Activated CD4-positive, alpha-beta memory T cell treated with anti-CD3 and anti-CD28 coated beads, Interleukin-2, amount 10 ng/mL, durations not matched to agents 7 days and 5 days (primary cell): ENCODE measurements at regions of chr12 and their contacts with region 1.

Region 1: DNA sequence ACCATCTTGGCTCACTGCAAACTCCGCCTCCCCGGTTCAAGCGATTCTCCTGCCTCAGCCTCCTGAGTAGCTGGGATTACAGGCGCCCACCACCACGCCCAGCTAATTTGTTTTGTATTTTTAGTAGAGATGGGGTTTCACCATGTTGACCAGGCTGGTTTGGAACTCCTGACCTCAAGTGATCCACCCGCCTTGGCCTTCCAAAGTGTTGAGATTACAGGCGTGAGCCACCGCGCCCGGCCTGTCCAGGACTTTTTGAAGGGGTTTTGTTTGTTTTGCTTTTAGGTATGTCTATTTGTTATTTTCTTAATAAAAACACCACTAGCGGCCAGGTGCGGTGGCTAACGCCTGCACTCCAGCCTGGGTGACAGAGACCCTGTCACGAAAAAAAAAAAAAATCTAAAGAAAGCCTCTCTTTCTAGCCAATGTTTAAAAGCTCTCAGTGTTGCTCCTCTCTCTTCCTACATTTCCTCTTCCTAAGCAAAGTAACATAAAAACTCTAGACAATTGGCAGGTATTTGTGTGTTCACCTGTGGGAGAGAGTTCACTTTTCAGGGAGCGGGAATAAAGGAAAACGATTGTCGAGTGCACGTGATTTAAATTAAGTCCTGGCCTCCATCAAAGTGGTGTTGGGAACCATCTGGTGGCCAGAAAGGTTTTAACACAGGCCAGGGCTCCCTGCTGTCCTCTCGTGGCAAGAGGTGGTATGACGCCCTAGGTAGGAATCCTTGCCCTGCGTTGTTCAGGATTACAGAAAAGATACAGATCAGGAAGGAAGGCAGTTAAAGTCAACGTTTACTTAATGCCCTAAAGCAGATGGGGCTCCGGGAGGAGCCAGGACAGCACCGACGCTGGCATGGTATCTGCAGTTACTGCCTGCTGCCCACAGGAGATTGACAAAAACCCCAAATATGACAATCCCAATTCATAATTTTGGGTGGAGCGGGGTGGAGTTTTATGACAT is 36.2 kb upstream of the ATP23 start:
- DNase-seq: peak; percentile 84
- H3K4me3 Mint-ChIP-seq: no peak overlapping the region
- H3K27ac Mint-ChIP-seq: no peak overlapping the region
- H3K4me1 Mint-ChIP-seq: peaks cover 7% of the 10 kb centered on the region
- H3K27me3 Mint-ChIP-seq: peaks cover 29% of the 10 kb centered on the region

Region 2: DNA sequence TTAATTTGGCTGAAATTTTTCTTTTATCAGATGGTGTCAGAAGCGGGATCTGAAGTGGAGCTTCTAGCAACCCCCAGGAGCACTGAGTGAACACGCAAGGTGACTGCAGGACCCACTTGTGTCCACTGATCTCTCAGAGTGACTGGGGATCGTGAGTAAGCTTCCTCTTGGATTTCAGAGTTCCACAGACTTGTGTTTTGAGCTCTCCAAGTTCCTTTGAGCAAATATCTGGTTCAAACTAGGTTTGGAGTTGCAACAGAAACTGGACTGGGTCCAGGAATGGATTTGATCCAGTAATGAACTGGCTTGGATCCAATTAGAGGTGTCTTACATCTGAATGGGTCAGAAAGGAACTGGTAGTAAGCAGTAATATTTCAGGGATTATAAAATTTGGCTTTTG is 247.4 kb before region 1 on chr12:
- CTCF ChIA-PET with region 1: no interaction called
- POLR2A ChIA-PET with region 1: no interaction called
- DNase-seq: no peak
- H3K4me3 Mint-ChIP-seq: no peak overlapping the region
- H3K27ac Mint-ChIP-seq: no peak overlapping the region
- H3K4me1 Mint-ChIP-seq: no peaks in the 10 kb centered on the region
- H3K27me3 Mint-ChIP-seq: peaks cover 6% of the 10 kb centered on the region

Region 3: DNA sequence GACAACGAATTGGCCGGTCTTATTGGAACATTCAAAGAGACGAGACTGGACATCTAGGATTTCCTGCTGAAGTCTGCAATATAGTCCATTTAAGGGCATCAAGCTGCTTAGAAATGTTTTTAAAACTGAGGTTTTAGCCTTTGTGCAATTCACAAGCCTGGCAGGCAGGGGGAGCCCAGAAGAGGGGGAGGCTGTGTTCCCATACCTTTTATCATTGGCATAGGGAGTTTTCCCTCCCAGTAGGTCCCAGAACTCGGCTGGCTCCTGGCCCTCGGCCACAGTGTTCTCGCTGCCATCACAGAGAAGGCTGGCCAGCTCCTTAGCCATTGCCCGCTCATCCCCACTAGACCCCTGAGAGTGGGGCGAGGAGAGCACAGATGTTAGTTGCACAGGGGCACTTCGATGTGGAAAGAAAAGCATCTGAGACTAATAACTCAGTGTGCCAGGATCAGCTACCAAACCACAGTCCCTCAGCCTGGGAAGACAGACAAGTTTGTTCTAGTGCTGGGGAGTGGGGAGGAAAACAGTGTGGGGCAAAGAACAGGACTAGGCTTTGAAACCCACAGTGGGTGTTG is 101.7 kb before region 1 on chr12:
- CTCF ChIA-PET with region 1: interaction called, 55 read pairs
- POLR2A ChIA-PET with region 1: interaction called, 3 read pairs
- DNase-seq: peak; percentile 30
- H3K4me3 Mint-ChIP-seq: no peak overlapping the region
- H3K27ac Mint-ChIP-seq: no peak overlapping the region
- H3K4me1 Mint-ChIP-seq: no peaks in the 10 kb centered on the region
- H3K27me3 Mint-ChIP-seq: no peaks in the 10 kb centered on the region

Region 4: DNA sequence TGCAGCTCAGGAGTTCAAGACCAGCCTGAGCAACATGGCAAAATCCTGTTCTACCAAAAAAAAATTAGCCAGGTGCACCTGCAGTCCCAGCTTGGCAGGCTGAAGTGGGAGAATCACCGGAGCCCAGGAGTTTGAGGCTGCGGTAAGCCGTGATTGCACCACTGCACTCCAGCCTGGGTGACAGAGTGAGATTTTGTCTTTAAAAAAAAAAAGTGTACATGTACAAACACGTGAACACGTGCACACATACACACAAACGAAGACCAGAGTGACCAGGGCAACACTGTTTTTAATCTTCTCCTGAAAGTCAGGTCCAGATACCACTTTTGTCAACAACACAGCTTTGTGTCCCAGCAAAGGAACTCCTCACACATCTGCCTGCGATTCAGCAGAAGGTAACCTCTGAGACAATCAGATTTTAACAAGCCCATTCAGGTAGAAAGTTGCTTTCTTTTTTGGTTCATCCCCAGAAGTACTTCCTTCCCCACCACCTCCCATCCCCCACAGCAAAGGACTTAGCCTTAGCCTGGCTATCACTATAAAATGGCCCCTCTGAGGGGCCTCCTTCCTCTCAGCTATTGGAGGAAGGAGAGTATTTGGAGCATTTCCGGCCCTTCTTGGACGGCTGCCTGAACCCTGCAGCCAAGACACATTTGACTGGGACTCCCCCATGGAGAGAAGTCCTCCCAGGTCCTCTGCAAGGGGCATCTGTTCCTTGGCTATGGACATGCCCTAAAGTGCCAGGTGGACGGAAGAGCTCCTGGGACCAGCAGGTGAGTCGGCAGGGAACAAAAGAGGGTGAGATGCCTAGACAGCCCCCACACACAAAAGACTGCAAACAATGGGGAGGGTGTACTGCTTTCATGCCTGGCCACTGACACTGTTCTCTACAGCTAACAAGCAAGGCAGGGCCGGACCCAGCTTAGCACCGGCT is 68.4 kb before region 1 on chr12:
- CTCF ChIA-PET with region 1: interaction called, 43 read pairs
- POLR2A ChIA-PET with region 1: no interaction called
- DNase-seq: peak; percentile 43
- H3K4me3 Mint-ChIP-seq: peak overlapping the region; percentile 21
- H3K27ac Mint-ChIP-seq: peak overlapping the region; percentile 79
- H3K4me1 Mint-ChIP-seq: peaks cover 86% of the 10 kb centered on the region
- H3K27me3 Mint-ChIP-seq: no peaks in the 10 kb centered on the region

Region 5: GRCh38 chr12:57865090-57865751 is 39.9 kb before region 1 on chr12:
- CTCF ChIA-PET with region 1: interaction called, 17 read pairs
- POLR2A ChIA-PET with region 1: interaction called, 3 read pairs
- DNase-seq: peak; percentile 62
- H3K4me3 Mint-ChIP-seq: peak overlapping the region; percentile 68
- H3K27ac Mint-ChIP-seq: no peak overlapping the region
- H3K4me1 Mint-ChIP-seq: peaks cover 8% of the 10 kb centered on the region
- H3K27me3 Mint-ChIP-seq: peaks cover 15% of the 10 kb centered on the region

Region 6: GRCh38 chr12:58105225-58106119 is 200.3 kb after region 1 on chr12:
- CTCF ChIA-PET with region 1: no interaction called
- POLR2A ChIA-PET with region 1: no interaction called
- DNase-seq: no peak
- H3K4me3 Mint-ChIP-seq: no peak overlapping the region
- H3K27ac Mint-ChIP-seq: no peak overlapping the region
- H3K4me1 Mint-ChIP-seq: no peaks in the 10 kb centered on the region
- H3K27me3 Mint-ChIP-seq: no peaks in the 10 kb centered on the region